ENCODE measurements at regions of chr1 and their contacts with region 1.

Region 1: DNA sequence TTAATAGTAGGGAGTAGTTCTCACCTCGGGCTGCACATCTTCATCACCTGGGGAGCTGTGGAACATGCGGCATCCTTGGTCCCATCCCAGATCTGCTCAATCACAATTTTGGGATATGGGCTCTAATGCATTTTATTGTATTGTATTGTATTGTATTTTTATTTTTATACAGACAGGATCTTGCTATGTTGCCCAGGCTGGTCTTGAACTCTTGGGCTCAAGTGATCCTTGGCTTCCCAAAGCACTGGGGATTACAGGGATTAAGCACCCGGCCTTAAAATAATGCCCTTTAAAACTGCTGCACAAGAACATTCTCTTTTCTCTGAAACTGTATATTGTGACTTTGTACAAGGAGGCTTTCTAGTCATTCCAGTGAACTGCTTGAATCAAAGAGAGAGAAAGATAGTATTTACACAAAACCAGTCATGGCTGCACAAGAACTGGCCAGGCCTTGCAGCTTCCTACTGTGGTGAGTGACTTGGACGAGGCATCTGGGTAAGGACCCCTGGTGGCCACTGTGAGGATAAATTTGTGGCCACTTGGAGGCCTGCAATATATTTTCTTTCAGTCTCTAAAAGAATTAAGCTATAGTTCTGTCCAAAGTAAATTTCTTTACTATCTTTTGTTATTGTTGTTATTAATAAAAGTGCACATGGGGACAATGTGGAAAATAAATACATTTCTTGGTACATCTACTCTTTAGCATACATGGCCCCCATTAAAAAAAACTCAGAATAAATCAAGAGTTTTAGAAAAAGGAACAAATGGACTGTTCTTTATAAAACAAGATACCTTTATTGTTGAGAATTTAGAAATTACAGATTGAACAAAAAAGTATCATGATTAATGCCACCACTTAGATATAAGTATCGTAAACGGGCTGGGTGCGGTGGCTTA is 48.0 kb downstream of the TBCE start:
- DNase-seq: peak; percentile 81
- H3K4me3 Mint-ChIP-seq: no peak overlapping the region
- H3K27ac Mint-ChIP-seq: no peak overlapping the region
- H3K4me1 Mint-ChIP-seq: no peaks in the 10 kb centered on the region
- H3K27me3 Mint-ChIP-seq: no peaks in the 10 kb centered on the region
- CTCF ChIP-seq: peak; percentile 87

Region 2: DNA sequence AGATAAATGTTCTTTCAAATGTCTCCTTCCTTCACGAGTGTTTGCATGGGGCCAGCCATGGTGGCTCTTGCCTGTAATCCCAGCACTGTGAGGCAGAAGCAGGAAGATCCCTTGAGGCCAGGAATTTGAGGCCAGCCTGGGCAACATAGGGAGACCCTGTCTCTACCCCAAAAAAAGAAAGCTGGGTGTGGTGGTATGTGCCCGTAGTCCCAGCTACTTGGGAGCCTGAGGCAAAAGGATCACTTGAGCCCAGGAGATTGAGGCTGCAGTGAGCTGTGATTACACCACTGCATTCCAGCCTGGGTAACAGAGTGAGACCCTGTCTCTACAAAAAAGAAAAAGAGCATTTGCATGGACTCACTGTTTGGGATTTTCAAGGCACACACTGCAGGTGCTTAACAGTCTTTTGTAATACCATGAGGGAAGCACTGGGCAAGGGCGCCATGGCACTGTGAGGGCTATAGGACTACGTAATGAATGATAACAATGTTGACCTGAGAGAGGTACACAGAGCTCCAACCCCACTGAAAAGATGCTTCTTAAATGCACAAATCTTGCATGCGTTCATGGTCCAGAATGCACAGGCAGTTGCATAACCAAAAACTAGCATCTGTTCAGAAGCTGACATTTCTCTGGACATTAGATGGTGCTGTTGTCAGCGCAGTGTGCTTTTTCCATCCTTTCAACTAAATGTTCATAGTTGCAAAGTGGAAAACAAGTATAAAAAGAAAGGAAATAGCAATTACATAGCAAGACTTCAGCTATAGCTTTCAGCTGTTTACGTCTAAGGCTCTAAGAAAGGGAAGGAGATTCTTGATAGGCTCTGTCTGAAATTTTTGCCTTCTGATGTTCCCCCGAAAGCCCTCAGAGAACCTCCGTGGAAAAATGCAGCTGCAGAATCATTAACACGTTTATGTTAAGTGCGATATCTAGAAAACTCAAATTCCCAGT is 928.5 kb before region 1 on chr1:
- CTCF ChIA-PET with region 1: no interaction called
- intact Hi-C with region 1: loop called (anchors 5 kb)
- DNase-seq: peak; percentile 48
- H3K4me3 Mint-ChIP-seq: no peak overlapping the region
- H3K27ac Mint-ChIP-seq: peak overlapping the region; percentile 15
- H3K4me1 Mint-ChIP-seq: peaks cover 28% of the 10 kb centered on the region
- H3K27me3 Mint-ChIP-seq: peaks cover 19% of the 10 kb centered on the region
- CTCF ChIP-seq: peak; percentile 63

Region 3: GRCh38 chr1:235160957-235161684 is 254.1 kb before region 1 on chr1 and contains the start of gene RBM34:
- CTCF ChIA-PET with region 1: interaction called, 3 read pairs
- intact Hi-C with region 1: loop called (anchors 5 kb)
- DNase-seq: peak; percentile 96
- H3K4me3 Mint-ChIP-seq: peak within 1 kb of the TSS; percentile 84
- H3K27ac Mint-ChIP-seq: peak within 1 kb of the TSS; percentile 83
- H3K4me1 Mint-ChIP-seq: no peaks in the 10 kb centered on the region
- H3K27me3 Mint-ChIP-seq: no peaks in the 10 kb centered on the region
- CTCF ChIP-seq: no peak
- total RNA-seq, gene RBM34: 79.8 and 89.1 TPM in 2 replicates

Region 4: GRCh38 chr1:235328357-235329138 is 86.7 kb before region 1 on chr1 and contains the start of gene GGPS1:
- CTCF ChIA-PET with region 1: interaction called, 6 read pairs
- intact Hi-C with region 1: loop called (anchors 2 kb)
- DNase-seq: peak; percentile 95
- H3K4me3 Mint-ChIP-seq: no peak within 1 kb of the TSS
- H3K27ac Mint-ChIP-seq: no peak within 1 kb of the TSS
- H3K4me1 Mint-ChIP-seq: peaks cover 14% of the 10 kb centered on the region
- H3K27me3 Mint-ChIP-seq: no peaks in the 10 kb centered on the region
- CTCF ChIP-seq: no peak
- total RNA-seq, gene GGPS1: 40.5 and 45.6 TPM in 2 replicates

Measured in Calu3 (cell line).